Activated T-helper 1 cell treated with anti-CD3 and anti-CD28 coated beads, Interleukin-12 subunit alpha, Interleukin-12 subunit beta, Interleukin-2, Interleukin-4 antibody, amounts not matched to agents 30 ng/mL and 10 ng/mL and 1 ng/mL, durations not matched to agents 14 hours and 24 hours and 36 hours (primary cell): ENCODE measurements at regions of chr14 and their contacts with region 1.

Region 1: DNA sequence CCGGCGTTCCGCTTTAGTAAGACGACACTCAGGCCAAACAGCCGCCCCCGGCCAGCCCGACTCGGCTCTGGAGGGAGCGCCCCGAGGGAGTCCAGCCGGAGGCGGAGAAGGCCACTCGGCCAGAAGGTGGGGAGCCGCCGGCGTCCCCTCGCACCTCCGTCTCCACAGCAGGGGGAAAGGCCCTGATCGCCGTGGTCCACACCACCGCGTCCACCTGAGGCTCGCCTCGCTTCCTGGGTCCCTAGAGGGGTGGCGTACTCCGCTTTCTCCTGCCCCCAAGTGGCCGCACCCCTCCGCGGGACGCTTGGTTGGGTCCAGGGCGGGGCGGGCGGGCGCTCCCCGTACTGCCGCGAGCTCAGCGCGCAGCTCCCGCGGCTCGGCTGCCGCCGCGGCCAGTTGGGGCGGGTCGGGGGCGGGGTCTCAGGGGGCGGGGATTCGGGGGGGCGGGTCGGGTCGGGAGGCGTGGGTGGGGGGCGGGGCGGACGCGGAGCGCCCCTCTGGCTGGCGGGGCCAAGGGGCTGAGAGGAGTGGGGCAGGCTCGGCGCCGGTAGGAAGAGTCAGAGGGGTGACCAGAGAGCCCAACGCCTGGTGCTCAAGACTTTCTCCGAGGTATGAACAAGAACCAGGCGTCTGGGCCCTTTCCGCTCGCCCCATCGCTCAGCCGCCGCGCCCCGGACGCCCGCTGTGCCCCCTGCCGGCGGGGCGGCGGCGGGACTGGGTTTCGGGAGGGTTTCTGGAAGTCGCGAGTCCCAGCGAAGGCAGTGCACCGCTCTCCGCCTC is at the start of gene FRMD6:
- DNase-seq: peak; percentile 74
- H3K4me3 Mint-ChIP-seq: peak within 1 kb of the TSS; percentile 81
- H3K27ac Mint-ChIP-seq: peak within 1 kb of the TSS; percentile 74
- H3K4me1 Mint-ChIP-seq: peaks cover 18% of the 10 kb centered on the region
- H3K27me3 Mint-ChIP-seq: peaks cover 7% of the 10 kb centered on the region
- total RNA-seq, gene FRMD6: 5.9 and 6.1 TPM in 2 replicates

Region 2: GRCh38 chr14:50955373-50956043 is 696.1 kb before region 1 on chr14:
- intact Hi-C with region 1: no loop called
- DNase-seq: no peak
- H3K4me3 Mint-ChIP-seq: no peak overlapping the region
- H3K27ac Mint-ChIP-seq: no peak overlapping the region
- H3K4me1 Mint-ChIP-seq: no peaks in the 10 kb centered on the region
- H3K27me3 Mint-ChIP-seq: peaks cover 6% of the 10 kb centered on the region

Region 3: DNA sequence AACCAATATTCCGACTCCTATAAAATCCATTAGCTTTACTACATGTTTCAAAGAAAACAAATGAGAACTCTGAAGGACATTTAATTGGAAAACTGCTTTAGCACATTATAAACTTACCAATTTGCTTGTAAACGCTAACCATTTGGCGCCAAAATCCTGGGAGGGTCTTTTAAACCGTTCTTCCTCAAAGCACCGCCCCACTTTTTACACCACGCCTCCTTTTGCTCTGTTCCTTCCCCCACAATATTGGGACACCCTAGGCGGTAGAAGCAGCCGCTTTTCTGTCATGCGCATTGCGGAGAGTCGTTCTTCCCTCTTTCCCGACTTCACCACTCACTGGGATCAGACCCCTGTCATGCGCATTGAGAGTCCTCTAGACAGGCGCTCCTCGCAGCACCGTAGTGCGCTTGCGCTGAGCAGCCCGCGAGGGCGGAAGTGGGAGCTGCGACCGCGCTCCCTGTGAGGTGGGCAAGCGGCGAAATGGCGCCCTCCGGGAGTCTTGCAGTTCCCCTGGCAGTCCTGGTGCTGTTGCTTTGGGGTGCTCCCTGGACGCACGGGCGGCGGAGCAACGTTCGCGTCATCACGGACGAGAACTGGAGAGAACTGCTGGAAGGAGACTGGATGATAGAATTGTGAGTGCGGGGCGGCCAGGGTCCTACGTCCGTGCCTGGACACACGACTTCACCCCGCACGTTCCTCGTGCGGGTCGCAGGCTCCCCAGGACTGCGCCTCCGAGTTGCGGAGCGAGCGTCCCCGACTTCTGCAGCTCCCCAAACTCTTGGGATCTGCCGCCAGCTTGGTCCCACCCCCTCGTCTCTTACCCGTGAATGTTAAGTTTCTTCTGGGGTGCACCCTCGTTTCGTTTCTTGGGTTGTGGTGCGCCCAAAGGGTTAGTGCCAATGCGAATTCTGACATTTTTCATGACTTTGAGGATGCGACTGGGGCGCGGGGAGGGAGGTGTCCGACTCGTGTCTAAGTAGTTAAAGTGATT is 411.5 kb before region 1 on chr14 and contains the start of gene TMX1:
- intact Hi-C with region 1: loop called (anchors 1 kb)
- DNase-seq: peak; percentile 87
- H3K4me3 Mint-ChIP-seq: no peak within 1 kb of the TSS
- H3K27ac Mint-ChIP-seq: no peak within 1 kb of the TSS
- H3K4me1 Mint-ChIP-seq: peaks cover 12% of the 10 kb centered on the region
- H3K27me3 Mint-ChIP-seq: no peaks in the 10 kb centered on the region
- total RNA-seq, gene TMX1: 51.1 and 51.3 TPM in 2 replicates

Region 4: DNA sequence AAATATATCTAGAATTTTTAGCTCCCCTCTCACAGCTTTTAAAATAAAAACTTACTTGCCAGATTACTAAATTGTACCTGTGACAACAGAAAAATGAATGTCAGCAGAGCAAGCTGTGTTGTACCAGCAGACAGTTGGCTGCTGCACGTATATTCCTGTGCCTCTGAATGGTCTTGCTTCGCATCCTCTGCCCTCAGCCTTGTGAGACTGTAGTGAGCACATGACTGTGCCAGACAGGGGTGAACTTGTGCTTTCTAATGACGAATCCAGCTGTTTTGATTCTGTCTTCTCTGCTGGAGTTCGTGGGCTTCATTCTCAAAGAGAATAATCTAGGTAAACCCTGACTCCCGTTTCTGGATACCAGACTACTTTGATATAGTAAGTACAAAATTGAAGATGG is 58.2 kb before region 1 on chr14:
- intact Hi-C with region 1: no loop called
- DNase-seq: no peak
- H3K4me3 Mint-ChIP-seq: no peak overlapping the region
- H3K27ac Mint-ChIP-seq: no peak overlapping the region
- H3K4me1 Mint-ChIP-seq: peaks cover 8% of the 10 kb centered on the region
- H3K27me3 Mint-ChIP-seq: peaks cover 38% of the 10 kb centered on the region

Region 5: GRCh38 chr14:51638071-51638944 is 13.3 kb before region 1 on chr14:
- intact Hi-C with region 1: no loop called
- DNase-seq: no peak
- H3K4me3 Mint-ChIP-seq: no peak overlapping the region
- H3K27ac Mint-ChIP-seq: no peak overlapping the region
- H3K4me1 Mint-ChIP-seq: no peaks in the 10 kb centered on the region
- H3K27me3 Mint-ChIP-seq: peaks cover 14% of the 10 kb centered on the region

Region 6: DNA sequence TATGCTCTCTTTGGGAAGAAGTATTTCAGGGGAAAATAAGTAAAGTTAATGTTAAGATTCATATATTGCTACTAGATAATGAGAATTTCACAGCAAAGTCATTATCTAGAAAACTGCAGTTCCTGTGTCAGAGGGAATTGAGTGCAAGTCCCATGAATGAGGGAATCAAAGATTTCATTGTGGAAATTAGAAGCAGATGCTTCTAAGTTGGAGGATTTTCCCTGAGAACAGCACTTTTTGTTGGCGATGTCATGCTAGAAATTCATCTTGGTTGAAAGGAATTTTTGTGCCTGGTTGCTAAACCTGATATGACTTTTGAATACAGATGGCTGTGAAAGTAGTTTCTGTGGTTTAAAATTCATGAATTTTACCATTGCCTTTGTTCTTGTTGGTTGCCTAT is 25.7 kb after region 1 on chr14:
- intact Hi-C with region 1: loop called (anchors 2 kb)
- DNase-seq: no peak
- H3K4me3 Mint-ChIP-seq: no peak overlapping the region
- H3K27ac Mint-ChIP-seq: no peak overlapping the region
- H3K4me1 Mint-ChIP-seq: peaks cover 7% of the 10 kb centered on the region
- H3K27me3 Mint-ChIP-seq: peaks cover 8% of the 10 kb centered on the region

Region 7: GRCh38 chr14:51780006-51780692 is 128.6 kb after region 1 on chr14:
- intact Hi-C with region 1: loop called (anchors 1 kb)
- DNase-seq: peak; percentile 56
- H3K4me3 Mint-ChIP-seq: no peak overlapping the region
- H3K27ac Mint-ChIP-seq: no peak overlapping the region
- H3K4me1 Mint-ChIP-seq: peaks cover 9% of the 10 kb centered on the region
- H3K27me3 Mint-ChIP-seq: peaks cover 25% of the 10 kb centered on the region

Region 8: DNA sequence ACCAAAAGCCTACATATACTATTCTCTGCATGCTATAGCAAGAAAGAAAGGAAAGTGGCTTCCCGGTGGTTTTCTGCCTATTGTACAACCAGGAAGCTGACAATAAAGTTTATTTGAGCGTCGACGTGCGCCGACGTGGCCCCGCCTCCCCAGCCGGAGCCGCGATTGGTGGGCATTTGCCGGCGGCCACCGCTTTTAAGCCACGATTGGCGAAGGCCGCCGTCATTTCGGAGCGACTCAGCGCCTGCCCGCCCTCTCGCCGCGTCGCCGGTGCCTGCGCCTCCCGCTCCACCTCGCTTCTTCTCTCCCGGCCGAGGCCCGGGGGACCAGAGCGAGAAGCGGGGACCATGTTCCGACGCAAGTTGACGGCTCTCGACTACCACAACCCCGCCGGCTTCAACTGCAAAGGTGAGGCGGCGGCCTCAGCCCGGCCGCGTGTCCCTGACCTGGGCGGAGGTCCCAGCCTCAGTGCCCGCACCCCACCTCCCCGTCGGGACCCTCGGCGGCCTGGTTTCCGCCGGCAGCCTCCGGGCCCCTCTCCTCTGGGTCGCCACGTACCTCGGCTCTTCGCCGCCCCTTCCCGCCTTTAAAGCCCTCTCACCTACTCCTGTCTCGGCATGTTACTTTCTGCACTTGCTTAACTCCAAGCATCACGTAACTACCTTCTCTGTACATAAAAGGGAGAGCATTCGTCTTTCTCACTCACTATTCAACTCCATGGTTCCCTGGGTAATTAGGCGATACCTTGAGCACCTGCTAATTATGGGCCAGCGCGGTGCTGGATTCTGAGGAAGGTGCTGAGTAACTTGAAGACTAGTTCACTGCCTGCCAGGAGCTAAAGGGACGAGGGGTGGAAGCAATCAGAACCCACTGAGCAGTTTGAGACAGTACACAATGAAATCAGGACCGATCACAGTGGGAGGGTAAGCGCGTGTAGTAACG is 338.0 kb after region 1 on chr14 and contains the start of gene RTRAF:
- intact Hi-C with region 1: loop called (anchors 2 kb)
- DNase-seq: peak; percentile 89
- H3K4me3 Mint-ChIP-seq: peak within 1 kb of the TSS; percentile 94
- H3K27ac Mint-ChIP-seq: peak within 1 kb of the TSS; percentile 91
- H3K4me1 Mint-ChIP-seq: peaks cover 31% of the 10 kb centered on the region
- H3K27me3 Mint-ChIP-seq: no peaks in the 10 kb centered on the region
- total RNA-seq, gene RTRAF: 215 and 230 TPM in 2 replicates